IMR-90 (cell line): ENCODE measurements at regions of chr14 and their contacts with region 1.

Region 1: GRCh38 chr14:99415496-99416281 is 65.0 kb downstream of the SETD3 start:
- DNase-seq: peak; percentile 82
- ATAC-seq: peak; percentile 96
- H3K4me3 ChIP-seq: no peak overlapping the region
- H3K27ac ChIP-seq: no peak overlapping the region
- H3K4me1 ChIP-seq: no peaks in the 10 kb centered on the region; the same call in 1 of the 2 replicates
- H3K27me3 ChIP-seq: no peaks in the 10 kb centered on the region
- CTCF ChIP-seq: peak; percentile 85
- POLR2A ChIP-seq: peak; percentile 18; the same call in 1 of the 2 replicates
- RAD21 ChIP-seq: peak; percentile 85

Region 2: GRCh38 chr14:98692857-98693256 is 722.8 kb before region 1 on chr14:
- CTCF ChIA-PET with region 1: no interaction called
- POLR2A ChIA-PET with region 1: no interaction called
- dilution Hi-C with region 1: no loop called
- in situ Hi-C with region 1: no loop called
- intact Hi-C with region 1: no loop called
- DNase-seq: no peak
- ATAC-seq: no peak
- H3K4me3 ChIP-seq: no peak overlapping the region
- H3K27ac ChIP-seq: no peak overlapping the region
- H3K4me1 ChIP-seq: no peaks in the 10 kb centered on the region
- H3K27me3 ChIP-seq: no peaks in the 10 kb centered on the region
- CTCF ChIP-seq: no peak
- POLR2A ChIP-seq: no peak
- RAD21 ChIP-seq: no peak

Region 3: GRCh38 chr14:99127651-99128167 is 288.0 kb before region 1 on chr14:
- CTCF ChIA-PET with region 1: no interaction called
- POLR2A ChIA-PET with region 1: no interaction called
- dilution Hi-C with region 1: no loop called
- in situ Hi-C with region 1: no loop called
- intact Hi-C with region 1: no loop called
- DNase-seq: no peak
- ATAC-seq: no peak
- H3K4me3 ChIP-seq: no peak overlapping the region
- H3K27ac ChIP-seq: no peak overlapping the region
- H3K4me1 ChIP-seq: no peaks in the 10 kb centered on the region
- H3K27me3 ChIP-seq: no peaks in the 10 kb centered on the region
- CTCF ChIP-seq: no peak
- POLR2A ChIP-seq: no peak
- RAD21 ChIP-seq: no peak

Region 4: GRCh38 chr14:99320105-99320572 is 95.5 kb before region 1 on chr14:
- CTCF ChIA-PET with region 1: interaction called, 27 read pairs
- POLR2A ChIA-PET with region 1: no interaction called
- dilution Hi-C with region 1: no loop called
- in situ Hi-C with region 1: loop called (anchors 10 kb)
- intact Hi-C with region 1: loop called (anchors 1 kb)
- DNase-seq: peak; percentile 8
- ATAC-seq: peak; percentile 82
- H3K4me3 ChIP-seq: no peak overlapping the region
- H3K27ac ChIP-seq: no peak overlapping the region
- H3K4me1 ChIP-seq: no peaks in the 10 kb centered on the region
- H3K27me3 ChIP-seq: peaks cover 2% of the 10 kb centered on the region; the same call in 1 of the 2 replicates
- CTCF ChIP-seq: peak; percentile 59
- POLR2A ChIP-seq: no peak
- RAD21 ChIP-seq: peak; percentile 50

Region 5: DNA sequence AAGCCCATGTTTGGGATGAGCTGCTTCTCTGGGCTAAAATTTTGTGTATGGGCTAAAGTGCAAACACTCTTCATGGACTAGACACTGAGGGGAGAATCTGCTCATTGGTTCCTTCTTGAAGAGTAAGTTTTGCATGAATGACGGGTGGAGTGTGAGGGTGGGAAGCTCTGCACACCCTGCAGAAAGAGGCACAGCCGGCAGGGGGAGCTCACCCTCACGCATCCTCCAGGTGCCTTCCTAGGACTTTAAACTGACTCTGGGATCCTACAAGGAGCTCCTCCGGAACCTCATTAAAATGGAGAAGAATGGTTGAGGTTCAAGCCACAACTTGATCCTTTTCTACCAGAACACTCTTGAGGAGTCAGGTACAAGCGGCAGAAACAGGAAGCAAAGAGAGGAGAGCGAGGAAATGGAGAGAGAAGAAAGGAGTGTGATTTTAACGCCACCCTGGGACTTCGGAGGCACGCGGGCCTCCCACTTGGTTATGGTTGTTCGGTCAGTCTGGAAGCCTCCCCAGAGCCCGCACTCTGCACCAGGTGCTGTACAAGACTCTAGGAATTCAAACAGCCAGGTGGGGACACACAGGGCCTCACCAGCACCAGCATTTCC is 22.5 kb before region 1 on chr14:
- CTCF ChIA-PET with region 1: interaction called, 11 read pairs
- POLR2A ChIA-PET with region 1: no interaction called
- dilution Hi-C with region 1: no loop called
- in situ Hi-C with region 1: no loop called
- intact Hi-C with region 1: loop called (anchors 1 kb)
- DNase-seq: peak; percentile 31
- ATAC-seq: peak; percentile 52; the same call in 1 of the 2 replicates
- H3K4me3 ChIP-seq: no peak overlapping the region
- H3K27ac ChIP-seq: no peak overlapping the region
- H3K4me1 ChIP-seq: peaks cover 2% of the 10 kb centered on the region; the same call in 1 of the 2 replicates
- H3K27me3 ChIP-seq: no peaks in the 10 kb centered on the region
- CTCF ChIP-seq: peak; percentile 57
- POLR2A ChIP-seq: no peak
- RAD21 ChIP-seq: peak; percentile 32

Region 6: DNA sequence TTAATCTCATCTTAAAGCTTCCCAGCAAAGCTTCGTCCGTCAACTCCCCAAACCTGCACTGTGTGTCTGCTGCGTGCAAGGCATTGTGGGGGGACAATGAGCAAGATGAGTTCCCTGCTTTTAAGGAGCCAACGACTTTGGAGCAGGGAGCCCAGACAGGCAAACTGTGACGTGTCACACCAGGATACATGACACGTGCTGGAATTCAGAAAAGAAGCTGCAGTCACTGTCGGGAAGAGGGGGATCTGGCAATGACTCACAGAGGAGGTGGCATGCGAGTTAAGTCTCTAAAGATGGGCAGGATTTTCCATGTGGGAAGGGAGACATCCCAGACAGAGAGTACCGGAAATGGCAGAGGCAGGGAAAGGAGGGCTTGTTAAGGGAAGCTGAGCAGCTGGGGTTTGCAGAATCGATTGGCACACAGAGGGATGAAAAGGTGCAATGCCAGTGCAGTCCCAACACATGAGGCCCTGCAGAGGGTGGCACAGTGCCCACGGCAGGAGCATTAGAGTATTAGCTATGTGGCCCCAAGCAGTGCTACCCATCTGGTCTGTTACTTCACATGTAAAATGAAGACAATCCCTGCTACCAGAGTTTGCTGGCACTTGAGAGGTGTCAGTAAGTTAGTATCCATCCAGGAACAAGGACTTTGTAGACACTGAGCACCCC is 12.1 kb after region 1 on chr14:
- CTCF ChIA-PET with region 1: interaction called, 11 read pairs
- POLR2A ChIA-PET with region 1: no interaction called
- dilution Hi-C with region 1: no loop called
- in situ Hi-C with region 1: no loop called
- intact Hi-C with region 1: no loop called
- DNase-seq: peak; percentile 56
- ATAC-seq: peak; percentile 68
- H3K4me3 ChIP-seq: no peak overlapping the region
- H3K27ac ChIP-seq: no peak overlapping the region
- H3K4me1 ChIP-seq: peaks cover 3% of the 10 kb centered on the region
- H3K27me3 ChIP-seq: no peaks in the 10 kb centered on the region
- CTCF ChIP-seq: no peak
- POLR2A ChIP-seq: no peak
- RAD21 ChIP-seq: no peak